ENCODE measurements at regions of chr6 and their contacts with region 1.

Region 1: DNA sequence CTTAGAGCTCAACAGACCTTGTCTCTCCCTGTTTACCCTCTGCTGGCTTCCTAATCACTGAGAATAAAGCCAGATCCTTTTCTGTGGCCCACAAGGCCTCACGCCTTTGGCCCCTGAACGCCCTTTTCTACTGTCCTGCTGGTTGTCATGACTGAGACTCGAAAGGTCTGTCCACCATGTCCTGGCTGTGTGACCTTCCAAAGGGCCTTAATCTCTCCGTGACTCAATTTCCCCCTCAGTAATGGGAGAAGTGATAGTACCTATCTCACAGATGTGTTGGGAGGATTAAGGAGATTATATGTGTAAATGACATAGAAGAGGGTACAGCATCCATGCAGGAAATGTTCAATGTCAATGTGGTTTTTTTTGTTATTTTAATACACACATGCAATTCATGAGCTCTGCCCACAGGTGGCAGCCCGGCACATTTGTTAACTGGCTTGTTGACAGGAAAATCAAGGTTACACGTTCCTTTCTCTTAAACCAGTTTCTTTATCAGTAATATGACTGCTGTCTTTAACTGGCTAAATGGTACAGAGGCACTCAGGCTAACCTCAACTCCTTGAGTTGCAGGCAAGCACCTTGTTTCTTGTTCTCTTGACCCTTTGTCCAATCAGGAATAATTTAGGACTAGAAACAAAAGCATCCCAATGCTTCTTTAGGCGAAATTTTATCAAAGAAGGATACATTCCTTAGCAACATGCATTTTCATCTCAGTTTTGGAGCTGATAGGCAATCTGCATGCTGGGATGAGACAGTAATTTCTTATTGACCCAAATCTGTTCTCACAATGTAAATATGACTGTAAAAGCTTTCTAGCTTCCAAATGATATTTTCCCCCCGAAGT is 16.6 kb downstream of the SLC22A1 start:
- DNase-seq: peak; percentile 72
- ATAC-seq: peak; percentile 46
- H3K4me3 ChIP-seq: no peak overlapping the region
- H3K27ac ChIP-seq: no peak overlapping the region; the same call in 1 of the 2 replicates
- H3K4me1 ChIP-seq: peaks cover 12% of the 10 kb centered on the region
- H3K27me3 ChIP-seq: no peaks in the 10 kb centered on the region
- CTCF ChIP-seq: peak; percentile 76
- POLR2A ChIP-seq: no peak
- RAD21 ChIP-seq: peak; percentile 71

Region 2: DNA sequence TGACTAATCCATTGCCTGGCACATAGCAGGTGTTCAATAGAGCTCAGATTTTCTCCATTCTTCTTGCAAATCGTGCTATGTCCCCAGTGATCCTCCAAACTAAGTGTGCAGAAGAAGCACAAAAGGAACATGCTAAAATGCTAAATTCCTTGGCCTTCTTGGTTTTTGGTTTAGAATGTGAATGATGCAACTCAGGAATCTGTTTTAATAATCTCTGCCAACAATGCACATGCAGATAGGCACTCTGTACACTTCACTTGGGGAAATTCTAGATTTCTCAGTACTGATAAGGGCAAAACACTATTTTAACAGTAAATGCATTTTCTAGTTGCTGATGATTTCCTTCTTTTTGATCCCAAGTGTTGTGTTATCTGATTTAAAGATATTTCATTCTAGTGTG is 18.6 kb after region 1 on chr6:
- CTCF ChIA-PET with region 1: interaction called, 5 read pairs
- POLR2A ChIA-PET with region 1: no interaction called
- dilution Hi-C with region 1: no loop called
- in situ Hi-C with region 1: no loop called
- intact Hi-C with region 1: loop called (anchors 2 kb)
- DNase-seq: peak; percentile 46
- ATAC-seq: peak; percentile 70
- H3K4me3 ChIP-seq: no peak overlapping the region
- H3K27ac ChIP-seq: no peak overlapping the region
- H3K4me1 ChIP-seq: no peaks in the 10 kb centered on the region; the same call in 1 of the 2 replicates
- H3K27me3 ChIP-seq: no peaks in the 10 kb centered on the region
- CTCF ChIP-seq: no peak
- POLR2A ChIP-seq: no peak
- RAD21 ChIP-seq: no peak

Region 3: DNA sequence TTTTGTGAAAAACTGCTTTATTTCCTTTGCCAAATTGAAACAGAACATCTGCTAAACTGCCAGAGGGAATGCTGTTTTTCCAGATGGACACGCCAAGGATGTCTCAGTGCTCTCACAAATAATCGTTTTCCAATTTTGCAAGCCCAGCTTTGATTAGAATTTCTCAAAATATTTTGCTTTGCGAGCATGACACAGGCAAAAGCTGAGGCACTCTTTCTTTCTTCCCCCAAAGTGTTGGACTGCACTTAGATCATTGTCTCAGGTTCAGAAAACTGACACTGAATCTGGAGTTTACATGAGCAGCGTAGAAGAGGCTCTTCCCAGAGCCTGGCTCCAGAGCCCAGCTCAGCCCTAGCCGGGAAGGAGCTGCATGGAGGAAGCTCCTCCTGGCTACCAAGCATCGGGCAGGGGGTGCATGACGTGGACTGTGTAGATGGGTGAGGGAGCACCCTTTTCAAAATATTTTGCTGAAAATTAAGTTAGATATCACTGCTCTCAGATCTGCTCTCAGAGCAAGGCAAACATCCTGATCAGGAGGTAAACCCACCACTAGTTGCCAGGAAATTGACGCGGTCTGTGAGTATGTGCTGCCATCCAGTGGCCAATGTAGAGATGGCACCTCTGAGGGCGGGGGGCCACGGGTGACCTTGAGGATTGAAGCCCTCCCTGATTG is 317.5 kb after region 1 on chr6:
- CTCF ChIA-PET with region 1: interaction called, 14 read pairs
- POLR2A ChIA-PET with region 1: no interaction called
- dilution Hi-C with region 1: no loop called
- in situ Hi-C with region 1: no loop called
- intact Hi-C with region 1: loop called (anchors 1 kb)
- DNase-seq: peak; percentile 47
- ATAC-seq: peak; percentile 97
- H3K4me3 ChIP-seq: no peak overlapping the region; the same call in 1 of the 2 replicates
- H3K27ac ChIP-seq: peak overlapping the region; percentile 15; the same call in 1 of the 2 replicates
- H3K4me1 ChIP-seq: no peaks in the 10 kb centered on the region
- H3K27me3 ChIP-seq: no peaks in the 10 kb centered on the region
- CTCF ChIP-seq: peak; percentile 93
- POLR2A ChIP-seq: peak; percentile 55; the same call in 1 of the 2 replicates
- RAD21 ChIP-seq: peak; percentile 94

Region 4: GRCh38 chr6:160534050-160534696 is 396.0 kb after region 1 on chr6:
- CTCF ChIA-PET with region 1: interaction called, 3 read pairs
- POLR2A ChIA-PET with region 1: no interaction called
- dilution Hi-C with region 1: no loop called
- in situ Hi-C with region 1: no loop called
- intact Hi-C with region 1: loop called (anchors 5 kb)
- DNase-seq: peak; percentile 24
- ATAC-seq: peak; percentile 90
- H3K4me3 ChIP-seq: no peak overlapping the region
- H3K27ac ChIP-seq: no peak overlapping the region
- H3K4me1 ChIP-seq: no peaks in the 10 kb centered on the region
- H3K27me3 ChIP-seq: no peaks in the 10 kb centered on the region
- CTCF ChIP-seq: peak; percentile 73
- POLR2A ChIP-seq: no peak
- RAD21 ChIP-seq: peak; percentile 80